ENCODE measurements at regions of chr5 and their contacts with region 1.

Region 1: DNA sequence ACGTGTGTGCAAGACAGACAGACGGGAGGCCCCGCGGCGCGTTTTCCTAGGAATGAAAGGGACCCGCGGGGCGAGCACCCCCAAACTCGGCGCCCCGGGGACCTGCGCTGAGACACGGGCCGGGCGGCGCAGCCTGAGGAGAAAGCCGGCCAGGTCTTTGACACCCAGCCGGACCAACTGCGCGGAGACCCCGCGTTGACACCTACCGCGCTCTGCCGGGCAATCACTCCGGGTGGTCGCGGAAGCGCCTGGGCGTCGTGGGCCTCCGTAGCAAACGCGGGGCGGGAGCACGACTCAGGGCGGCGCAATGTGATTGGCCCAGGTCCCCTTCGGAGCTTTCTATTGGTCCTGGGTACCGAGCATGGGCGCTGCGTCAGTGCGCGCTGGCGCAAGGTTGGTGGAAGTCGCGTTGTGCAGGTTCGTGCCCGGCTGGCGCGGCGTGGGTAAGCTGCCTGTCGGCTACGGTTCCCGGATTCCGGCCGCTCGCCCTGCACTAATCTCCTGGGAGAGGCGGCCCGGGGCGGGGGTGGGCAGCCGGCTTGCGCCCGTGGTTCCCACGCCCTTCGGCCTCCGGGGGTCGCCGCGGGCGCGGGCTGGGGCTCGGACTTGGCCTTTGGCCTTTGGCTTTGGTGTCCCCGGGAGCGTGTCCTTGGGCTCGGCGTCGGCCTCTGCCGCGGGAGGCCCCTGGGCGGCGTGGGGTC is at the starts of genes FASTKD3 and MTRR:
- DNase-seq: peak; percentile 80
- ATAC-seq: peak; percentile 99
- H3K4me3 Mint-ChIP-seq: peak within 1 kb of the TSS; percentile 89
- H3K27ac Mint-ChIP-seq: peak within 1 kb of the TSS; percentile 65
- H3K4me1 Mint-ChIP-seq: peaks cover 62% of the 10 kb centered on the region
- H3K27me3 Mint-ChIP-seq: no peaks in the 10 kb centered on the region
- CTCF ChIP-seq: no peak
- total RNA-seq, gene FASTKD3: 12.1 and 16.0 TPM in 2 replicates
- total RNA-seq, gene MTRR: 54.8 and 70.7 TPM in 2 replicates

Region 2: GRCh38 chr5:7494481-7495130 is 374.3 kb before region 1 on chr5:
- CTCF ChIA-PET with region 1: no interaction called
- POLR2A ChIA-PET with region 1: no interaction called
- intact Hi-C with region 1: no loop called
- DNase-seq: no peak
- ATAC-seq: no peak
- H3K4me3 Mint-ChIP-seq: no peak overlapping the region
- H3K27ac Mint-ChIP-seq: no peak overlapping the region
- H3K4me1 Mint-ChIP-seq: no peaks in the 10 kb centered on the region
- H3K27me3 Mint-ChIP-seq: no peaks in the 10 kb centered on the region
- CTCF ChIP-seq: no peak

Region 3: DNA sequence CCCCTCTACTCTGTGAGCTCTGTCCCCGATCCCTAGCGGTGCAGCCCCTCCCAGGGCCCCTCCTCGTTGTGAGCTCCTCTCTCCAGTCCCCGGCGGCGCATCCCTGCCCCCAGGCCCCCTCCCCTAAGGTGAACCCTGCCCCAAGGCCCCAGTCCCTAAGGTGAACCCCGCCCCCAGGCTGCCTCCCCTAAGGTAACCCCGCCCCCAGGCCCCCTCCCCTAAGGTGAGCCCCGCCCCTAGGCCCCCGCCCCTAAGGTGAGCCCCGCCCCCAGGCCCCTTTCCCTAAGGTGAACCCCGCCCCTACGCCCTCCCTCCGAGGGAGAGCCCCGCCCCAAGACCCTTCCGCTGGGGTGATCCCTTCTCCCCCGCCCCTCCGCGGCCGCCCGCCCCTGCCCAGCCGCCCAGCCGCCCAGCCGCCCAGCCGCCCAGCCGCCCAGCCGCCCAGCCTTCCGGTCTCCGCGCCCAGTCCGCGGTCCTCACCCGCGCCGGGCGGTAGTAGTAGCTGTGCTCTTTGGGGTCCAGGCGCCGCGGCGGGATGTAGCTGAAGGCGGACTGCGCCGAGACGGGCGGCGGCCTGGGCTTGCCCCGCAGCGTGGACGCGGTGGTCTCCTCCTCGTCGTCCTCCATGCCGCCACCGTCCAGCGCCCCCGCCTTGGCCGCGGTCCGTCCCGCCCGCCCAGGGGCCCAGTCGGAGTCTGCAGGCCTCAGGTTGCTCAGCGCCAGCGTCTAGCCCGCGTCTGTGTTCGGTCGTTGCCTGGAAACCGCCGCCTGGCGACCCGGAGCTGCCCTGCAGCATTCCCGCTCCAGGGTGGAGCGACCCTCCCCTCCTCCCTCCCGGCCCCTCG is 18.3 kb before region 1 on chr5 and contains the start of gene CFAP90:
- CTCF ChIA-PET with region 1: no interaction called
- POLR2A ChIA-PET with region 1: interaction called, 12 read pairs
- intact Hi-C with region 1: loop called (anchors 1 kb)
- DNase-seq: peak; percentile 39
- ATAC-seq: peak; percentile 86
- H3K4me3 Mint-ChIP-seq: peak within 1 kb of the TSS; percentile 86
- H3K27ac Mint-ChIP-seq: no peak within 1 kb of the TSS
- H3K4me1 Mint-ChIP-seq: peaks cover 19% of the 10 kb centered on the region
- H3K27me3 Mint-ChIP-seq: peaks cover 18% of the 10 kb centered on the region
- CTCF ChIP-seq: no peak
- total RNA-seq, gene CFAP90: not detected in 2 replicates

Region 4: DNA sequence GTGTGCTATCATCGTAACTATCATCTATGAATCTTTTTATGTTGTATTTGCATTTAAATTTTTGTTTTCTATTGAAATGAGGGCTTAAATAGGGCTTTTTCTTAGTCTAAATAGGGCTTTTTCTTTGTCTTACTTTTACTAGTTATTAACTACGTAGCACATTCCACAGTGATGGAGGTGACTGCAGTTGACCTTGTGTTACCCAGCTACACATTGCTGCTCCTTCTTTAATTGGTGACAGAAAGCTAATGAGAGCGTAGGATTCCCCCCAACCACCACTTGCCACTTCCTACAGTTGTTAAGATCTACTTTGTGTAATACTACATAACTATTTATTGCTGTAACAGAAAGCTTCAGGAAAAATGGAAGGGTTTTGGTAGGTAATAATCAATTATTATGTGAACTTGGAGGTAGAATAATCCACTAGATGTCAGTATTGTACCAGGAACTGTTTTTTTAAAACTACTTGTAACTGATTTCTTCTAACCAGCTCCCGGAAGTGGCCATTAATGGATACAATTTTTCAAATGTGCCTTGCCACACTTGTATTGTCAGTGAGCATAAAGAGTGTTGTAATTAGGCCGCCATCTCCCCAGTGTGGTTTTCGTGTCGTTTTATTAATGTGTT is 18.0 kb after region 1 on chr5:
- CTCF ChIA-PET with region 1: interaction called, 10 read pairs
- POLR2A ChIA-PET with region 1: interaction called, 6 read pairs
- intact Hi-C with region 1: no loop called
- DNase-seq: no peak
- ATAC-seq: no peak
- H3K4me3 Mint-ChIP-seq: no peak overlapping the region
- H3K27ac Mint-ChIP-seq: no peak overlapping the region
- H3K4me1 Mint-ChIP-seq: peaks cover 3% of the 10 kb centered on the region
- H3K27me3 Mint-ChIP-seq: no peaks in the 10 kb centered on the region
- CTCF ChIP-seq: no peak

Region 5: DNA sequence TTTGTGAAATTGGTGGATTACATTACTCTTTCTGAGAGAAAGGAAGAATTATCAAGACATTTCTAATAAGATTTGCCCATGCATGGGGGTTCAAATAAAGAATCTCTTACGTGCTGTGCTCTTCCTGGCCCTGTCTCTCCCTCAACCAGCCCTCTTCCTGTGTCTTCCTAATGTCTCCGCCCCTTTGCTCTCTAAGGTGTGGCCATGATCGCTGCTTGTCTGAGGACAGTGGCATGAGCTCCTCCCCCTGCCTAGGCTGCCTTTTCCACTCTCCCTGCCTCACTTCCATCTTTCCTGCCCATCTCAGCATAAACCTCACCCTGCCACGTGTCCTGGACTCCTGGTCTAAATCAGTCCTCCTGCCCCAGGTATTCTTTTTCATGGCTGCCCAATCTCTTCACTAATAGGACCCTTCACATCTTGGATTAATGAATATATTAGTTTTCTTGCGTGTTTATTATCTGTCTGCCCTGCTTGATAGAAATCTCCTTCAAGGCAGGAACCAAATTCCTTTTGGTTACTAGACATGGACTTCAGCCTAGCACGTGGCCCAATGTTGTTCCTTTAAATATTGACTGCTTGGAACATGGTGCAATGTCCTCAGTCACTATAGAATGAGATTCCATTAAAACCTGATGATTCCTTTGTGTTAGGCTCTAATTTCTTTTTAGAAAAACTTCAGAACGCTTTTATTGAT is 122.3 kb after region 1 on chr5:
- CTCF ChIA-PET with region 1: no interaction called
- POLR2A ChIA-PET with region 1: no interaction called
- intact Hi-C with region 1: no loop called
- DNase-seq: no peak
- ATAC-seq: no peak
- H3K4me3 Mint-ChIP-seq: no peak overlapping the region
- H3K27ac Mint-ChIP-seq: no peak overlapping the region
- H3K4me1 Mint-ChIP-seq: no peaks in the 10 kb centered on the region
- H3K27me3 Mint-ChIP-seq: peaks cover 5% of the 10 kb centered on the region
- CTCF ChIP-seq: no peak

Region 6: DNA sequence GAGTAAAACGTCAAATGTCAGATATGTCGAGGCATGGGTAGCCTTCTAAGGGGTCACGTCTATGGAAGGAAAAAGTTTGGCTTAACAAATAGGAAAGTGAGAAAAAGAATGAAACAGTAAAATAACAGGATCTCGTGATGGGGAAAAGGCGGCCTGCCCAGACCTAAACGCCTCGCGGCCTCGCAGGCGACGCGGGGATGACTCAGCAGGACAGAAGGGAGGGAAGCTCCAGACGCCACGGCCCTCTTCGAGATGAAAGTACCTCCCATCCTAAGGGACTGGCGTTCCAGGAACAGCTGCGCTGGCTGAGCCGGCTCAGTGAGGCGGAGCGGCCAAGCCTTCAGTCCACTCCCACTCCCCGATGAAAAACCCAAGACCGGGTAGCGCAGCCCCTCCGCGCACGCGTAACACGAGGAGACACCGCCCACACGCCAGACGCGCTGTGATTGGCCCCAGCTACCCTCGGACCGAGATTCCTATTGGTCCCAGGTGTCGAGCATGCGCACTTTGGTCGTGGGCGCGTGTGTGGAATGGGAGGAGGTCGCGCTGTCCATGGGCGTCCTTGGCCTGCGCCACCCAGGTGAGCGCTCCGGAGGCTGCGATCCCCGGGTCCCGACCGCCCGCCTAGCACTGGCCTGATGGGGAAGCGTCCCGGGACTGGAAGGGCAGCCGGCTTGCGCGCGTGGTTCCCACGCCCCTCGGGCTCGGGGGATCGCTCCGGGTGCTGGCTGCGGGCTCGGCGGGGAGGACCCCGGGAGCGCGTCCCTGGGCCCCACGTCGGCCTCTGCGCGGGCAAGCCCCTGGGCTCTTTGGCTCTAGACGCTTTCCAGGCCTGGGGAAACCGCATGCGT is 588.5 kb after region 1 on chr5:
- CTCF ChIA-PET with region 1: no interaction called
- POLR2A ChIA-PET with region 1: no interaction called
- intact Hi-C with region 1: loop called (anchors 5 kb)
- DNase-seq: peak; percentile 76
- ATAC-seq: peak; percentile 96
- H3K4me3 Mint-ChIP-seq: peak overlapping the region; percentile 81
- H3K27ac Mint-ChIP-seq: peak overlapping the region; percentile 70
- H3K4me1 Mint-ChIP-seq: peaks cover 25% of the 10 kb centered on the region
- H3K27me3 Mint-ChIP-seq: no peaks in the 10 kb centered on the region
- CTCF ChIP-seq: no peak